ENCODE measurements at regions of chr10 and their contacts with region 1.

Region 1: DNA sequence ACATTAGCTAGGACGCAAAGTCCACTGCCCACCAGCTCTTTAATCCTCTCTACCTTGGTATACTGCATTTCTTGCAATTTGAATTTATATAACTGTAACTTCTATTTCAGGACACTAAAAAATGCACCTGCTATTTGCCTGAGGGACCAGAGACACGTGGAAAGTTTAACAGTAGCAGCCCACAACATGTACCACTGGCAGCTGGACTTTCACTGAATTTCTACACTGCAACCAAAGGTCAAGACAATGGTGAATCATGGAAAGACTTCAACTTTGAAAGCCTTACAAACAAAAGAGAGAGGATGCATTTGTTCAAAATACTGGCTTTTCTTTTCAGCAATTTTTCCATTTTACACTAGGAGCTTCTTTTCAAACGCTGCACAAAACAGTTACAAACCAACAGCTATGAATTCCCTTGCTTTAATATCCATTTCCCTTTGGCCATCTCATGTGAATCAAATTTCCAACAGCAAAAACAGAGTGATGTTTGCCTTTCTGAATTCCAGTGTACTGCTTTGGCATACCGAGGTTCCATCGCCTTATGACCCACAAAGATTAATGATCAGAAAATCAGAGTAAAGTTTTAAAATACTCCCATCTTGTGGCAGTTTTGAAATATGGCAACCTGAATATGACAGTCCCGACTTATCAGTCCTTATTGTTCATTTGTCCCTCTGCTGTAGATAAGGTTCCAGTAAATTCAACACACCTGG is 29.9 kb upstream of the HNRNPH3 start:
- DNase-seq: peak; percentile 70
- H3K4me3 ChIP-seq: no peak overlapping the region
- H3K27ac ChIP-seq: no peak overlapping the region
- H3K4me1 ChIP-seq: peaks cover 3% of the 10 kb centered on the region
- H3K27me3 ChIP-seq: no peaks in the 10 kb centered on the region

Region 2: DNA sequence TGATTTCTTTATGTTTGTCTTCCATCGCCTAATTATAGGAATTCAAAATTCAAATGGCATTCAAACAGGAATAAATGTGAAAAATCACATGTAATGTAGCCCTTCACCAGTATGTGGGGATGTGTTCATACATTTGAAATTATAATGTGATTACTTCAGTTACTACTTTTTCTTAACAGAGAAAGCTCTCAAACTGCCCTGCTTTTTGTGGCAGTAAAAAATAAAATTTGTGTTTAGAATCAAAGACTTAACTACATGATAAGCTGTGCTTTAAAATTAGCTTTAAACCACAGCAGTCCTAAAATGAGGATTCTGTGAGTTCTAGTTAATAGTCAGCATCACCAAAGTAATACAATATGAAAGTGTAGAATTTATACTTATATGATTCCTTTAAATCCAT is 219.1 kb before region 1 on chr10:
- in situ Hi-C with region 1: loop called (anchors 10 kb)
- DNase-seq: peak; percentile 72
- H3K4me3 ChIP-seq: peak overlapping the region; percentile 12; the same call in 1 of the 2 replicates
- H3K27ac ChIP-seq: peak overlapping the region; percentile 58
- H3K4me1 ChIP-seq: peaks cover 50% of the 10 kb centered on the region
- H3K27me3 ChIP-seq: no peaks in the 10 kb centered on the region

Region 3: GRCh38 chr10:68208424-68209042 is 93.4 kb before region 1 on chr10:
- in situ Hi-C with region 1: loop called (anchors 10 kb)
- DNase-seq: peak; percentile 81
- H3K4me3 ChIP-seq: no peak overlapping the region
- H3K27ac ChIP-seq: peak overlapping the region; percentile 5; the same call in 1 of the 2 replicates
- H3K4me1 ChIP-seq: peaks cover 4% of the 10 kb centered on the region; the same call in 1 of the 2 replicates
- H3K27me3 ChIP-seq: no peaks in the 10 kb centered on the region

Measured in GM23248 (cell line).